Aorta (tissue), 5 donors: ENCODE measurements at regions of chr12 and their contacts with region 1.

Region 1: DNA sequence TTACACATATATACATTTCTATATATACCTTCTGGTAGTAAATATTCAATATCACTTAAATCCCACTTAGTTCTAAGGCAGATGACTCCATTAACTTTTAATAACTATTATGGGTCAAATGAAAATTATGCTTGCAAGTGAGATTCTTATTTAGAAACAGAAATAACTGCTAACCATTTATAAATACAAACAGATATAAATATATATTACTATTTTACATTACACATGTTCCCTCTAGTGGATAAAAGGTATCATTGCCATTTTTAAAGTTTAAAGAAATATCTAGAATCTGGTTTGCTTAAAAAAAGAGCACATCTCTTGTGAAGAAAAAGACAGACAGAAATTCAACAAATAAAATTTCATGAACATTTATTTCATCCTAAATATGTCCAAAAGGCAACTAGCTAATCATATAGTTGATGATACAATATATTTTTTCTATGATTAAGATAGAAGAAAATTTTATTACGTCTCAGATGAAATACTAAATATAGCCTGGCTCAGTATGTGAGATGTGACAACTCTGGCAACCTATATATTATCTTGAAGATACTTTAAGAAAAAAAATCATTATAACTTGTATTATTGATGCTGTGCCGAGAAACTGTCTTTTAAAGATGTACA is 11.7 kb upstream of the RAD51AP1 start:
- DNase-seq: no peak
- ATAC-seq: no peak
- H3K4me3 ChIP-seq: no peak overlapping the region
- H3K27ac ChIP-seq: no peak overlapping the region
- H3K4me1 ChIP-seq: no peaks in the 10 kb centered on the region
- H3K27me3 ChIP-seq: no peaks in the 10 kb centered on the region

Region 2: DNA sequence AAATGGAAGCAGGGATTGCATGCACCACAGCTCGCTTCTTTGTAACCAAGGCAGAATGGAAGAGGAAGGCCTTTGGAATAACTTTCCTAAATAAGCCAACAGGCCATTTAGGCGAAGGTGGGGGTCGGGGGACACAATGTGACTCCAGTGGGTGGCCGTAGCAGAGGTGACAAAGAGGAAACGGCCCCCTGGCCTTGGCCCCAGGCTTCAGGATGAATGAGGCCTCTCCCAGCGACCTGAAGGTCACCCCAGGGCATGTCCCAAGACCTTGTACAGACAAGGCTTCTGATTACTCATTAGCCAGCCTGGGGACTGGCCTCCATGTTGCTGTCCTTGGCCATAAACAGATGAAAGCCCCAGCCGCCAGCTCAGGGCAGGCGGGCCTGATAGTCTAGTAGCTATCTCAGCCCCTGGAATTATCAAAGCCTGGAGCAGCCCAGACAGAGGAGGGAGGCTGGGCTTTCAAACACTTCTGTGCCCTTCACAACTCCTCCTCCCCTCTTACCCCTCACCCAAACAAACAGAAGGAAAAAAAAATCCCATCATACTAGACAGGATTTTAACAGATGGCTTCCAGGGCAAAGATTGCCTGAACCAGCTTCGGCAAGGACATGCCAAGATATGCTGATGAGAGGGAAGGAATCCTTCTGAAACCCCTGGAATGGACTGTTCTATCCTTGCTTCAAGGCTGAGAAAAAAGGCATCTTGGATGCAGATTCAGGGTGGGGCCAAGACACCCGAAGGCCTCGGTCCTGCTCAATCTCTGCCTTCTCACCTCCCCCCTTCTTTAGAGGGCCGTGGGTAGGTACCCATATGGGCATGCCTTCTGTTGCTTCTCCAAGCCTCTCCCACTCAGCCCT is 511.6 kb before region 1 on chr12:
- intact Hi-C with region 1: no loop called
- DNase-seq: no peak
- ATAC-seq: no peak
- H3K4me3 ChIP-seq: no peak overlapping the region
- H3K27ac ChIP-seq: no peak overlapping the region
- H3K4me1 ChIP-seq: no peaks in the 10 kb centered on the region
- H3K27me3 ChIP-seq: no peaks in the 10 kb centered on the region

Region 3: GRCh38 chr12:4307593-4308333 is 219.3 kb before region 1 on chr12:
- intact Hi-C with region 1: loop called (anchors 5 to 10 kb)
- DNase-seq: peak in 1 of 2 donors; percentile 81
- ATAC-seq: peak; percentile 90
- H3K4me3 ChIP-seq: no peak overlapping the region
- H3K27ac ChIP-seq: no peak overlapping the region
- H3K4me1 ChIP-seq: no peaks in the 10 kb centered on the region
- H3K27me3 ChIP-seq: no peaks in the 10 kb centered on the region